Adrenal gland (tissue), 19 donors: ENCODE measurements at regions of chr15 and their contacts with region 1.

Region 1: DNA sequence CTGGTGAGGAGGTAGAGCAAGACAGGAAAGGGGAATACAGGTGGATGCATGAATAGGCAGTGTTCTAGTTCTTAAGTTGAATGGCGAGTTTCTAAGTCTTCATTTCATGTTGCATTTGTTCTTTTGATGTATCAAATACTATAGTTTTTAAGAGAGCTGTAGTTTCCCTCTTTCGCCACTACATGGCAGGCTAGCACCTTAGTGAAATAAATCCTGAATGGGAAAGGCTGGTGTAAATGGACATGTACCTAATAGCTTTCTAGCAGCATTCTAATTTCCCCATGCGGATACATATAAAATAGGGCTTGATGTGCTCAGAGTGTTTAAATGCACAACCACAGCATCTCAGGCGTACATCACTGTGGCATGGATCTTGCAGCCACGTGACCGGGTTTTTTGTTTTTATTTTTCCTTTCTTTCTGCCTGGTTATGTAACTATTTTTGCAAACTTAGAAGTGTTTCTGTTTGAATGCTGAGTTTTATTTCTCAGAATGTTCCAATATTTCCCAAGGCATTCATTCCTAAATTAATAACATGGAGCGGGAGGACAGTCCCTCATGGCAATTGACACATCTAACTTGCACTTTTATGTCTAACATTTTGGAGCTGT is 23.5 kb upstream of the CLN6 start:
- DNase-seq: peak in 4 of 7 donors; percentile 48 to 72 (median 64)
- H3K4me3 ChIP-seq: peak overlapping the region in 1 of 4 donors; percentile 4
- H3K27ac ChIP-seq: no peak overlapping the region
- H3K4me1 ChIP-seq: peaks cover 3 to 5% of the 10 kb centered on the region in 2 donors
- H3K27me3 ChIP-seq: no peaks in the 10 kb centered on the region
- CTCF ChIP-seq: peak; percentile 78 to 94 (median 90)
- POLR2A ChIP-seq: no peak

Region 2: GRCh38 chr15:68672781-68673205 is 419.8 kb after region 1 on chr15:
- intact Hi-C with region 1: loop called (anchors 10 kb)
- DNase-seq: no peak
- H3K4me3 ChIP-seq: no peak overlapping the region
- H3K27ac ChIP-seq: no peak overlapping the region
- H3K4me1 ChIP-seq: no peaks in the 10 kb centered on the region
- H3K27me3 ChIP-seq: no peaks in the 10 kb centered on the region
- CTCF ChIP-seq: no peak
- POLR2A ChIP-seq: no peak